ENCODE measurements at regions of chr1 and their contacts with region 1.

Region 1: GRCh38 chr1:38859561-38860453 is at the start of gene RRAGC:
- DNase-seq: peak; percentile 99
- H3K4me3 Mint-ChIP-seq: peak within 1 kb of the TSS; percentile 86
- H3K27ac Mint-ChIP-seq: peak within 1 kb of the TSS; percentile 91
- H3K4me1 Mint-ChIP-seq: peaks cover 51% of the 10 kb centered on the region
- H3K27me3 Mint-ChIP-seq: no peaks in the 10 kb centered on the region
- total RNA-seq, gene RRAGC: 22.3 to 23.3 TPM

Region 2: GRCh38 chr1:38274974-38275373 is 584.8 kb before region 1 on chr1:
- CTCF ChIA-PET with region 1: no interaction called
- intact Hi-C with region 1: no loop called
- DNase-seq: no peak
- H3K4me3 Mint-ChIP-seq: no peak overlapping the region
- H3K27ac Mint-ChIP-seq: no peak overlapping the region
- H3K4me1 Mint-ChIP-seq: no peaks in the 10 kb centered on the region
- H3K27me3 Mint-ChIP-seq: peaks cover 24% of the 10 kb centered on the region

Region 3: DNA sequence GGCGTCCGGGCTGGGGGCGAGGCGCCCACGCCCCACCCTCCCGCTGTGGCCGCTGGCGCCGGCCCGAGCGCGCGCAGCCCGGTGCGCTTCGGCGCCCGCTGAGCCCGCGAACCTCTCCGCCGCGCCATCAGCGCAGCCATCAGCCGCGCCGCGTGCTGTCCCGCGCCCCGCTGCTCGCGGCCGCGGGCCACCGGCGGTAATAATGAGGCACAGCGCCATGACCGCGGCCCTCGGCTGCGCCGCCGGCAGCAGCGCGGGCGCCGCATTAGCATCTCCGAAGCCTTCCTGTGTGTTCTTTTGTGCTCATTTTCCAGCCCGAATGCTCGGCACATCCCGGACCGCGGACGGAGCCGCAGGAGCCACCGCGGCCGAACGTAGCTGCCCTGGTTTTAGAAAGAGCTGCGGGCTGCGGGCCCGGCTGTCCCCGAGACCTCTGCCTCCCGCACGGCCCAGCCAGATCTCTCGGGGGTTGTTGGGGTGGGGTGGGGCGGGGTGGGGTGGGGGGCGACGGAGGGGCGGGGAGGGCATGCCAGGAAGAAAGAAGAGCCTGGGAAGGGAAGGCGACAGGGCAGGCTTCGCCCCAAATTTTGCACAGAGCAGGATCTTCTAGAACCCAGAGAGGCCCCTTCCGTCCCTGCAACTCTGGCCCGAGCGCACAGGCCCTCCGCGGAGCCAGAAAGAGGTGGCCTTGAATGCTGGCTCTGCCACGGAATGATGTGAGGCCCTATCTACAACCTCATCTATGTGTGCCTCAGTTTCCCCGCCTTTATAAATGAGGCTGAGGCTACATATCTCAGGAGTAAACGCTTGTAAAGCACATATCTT is 55.5 kb before region 1 on chr1:
- CTCF ChIA-PET with region 1: no interaction called
- intact Hi-C with region 1: no loop called
- DNase-seq: no peak
- H3K4me3 Mint-ChIP-seq: peak overlapping the region; percentile 51
- H3K27ac Mint-ChIP-seq: no peak overlapping the region
- H3K4me1 Mint-ChIP-seq: peaks cover 4% of the 10 kb centered on the region
- H3K27me3 Mint-ChIP-seq: peaks cover 50% of the 10 kb centered on the region

Region 4: GRCh38 chr1:38873027-38873969 is 13.5 kb after region 1 on chr1 and contains the start of gene MYCBP:
- CTCF ChIA-PET with region 1: no interaction called
- intact Hi-C with region 1: loop called (anchors 1 kb)
- DNase-seq: peak; percentile 97
- H3K4me3 Mint-ChIP-seq: peak within 1 kb of the TSS; percentile 86
- H3K27ac Mint-ChIP-seq: peak within 1 kb of the TSS; percentile 57
- H3K4me1 Mint-ChIP-seq: peaks cover 19% of the 10 kb centered on the region
- H3K27me3 Mint-ChIP-seq: no peaks in the 10 kb centered on the region
- total RNA-seq, gene MYCBP: 54.6 to 58.0 TPM

Region 5: GRCh38 chr1:38891753-38892152 is 31.9 kb after region 1 on chr1:
- CTCF ChIA-PET with region 1: no interaction called
- intact Hi-C with region 1: no loop called
- DNase-seq: no peak
- H3K4me3 Mint-ChIP-seq: no peak overlapping the region
- H3K27ac Mint-ChIP-seq: no peak overlapping the region
- H3K4me1 Mint-ChIP-seq: no peaks in the 10 kb centered on the region
- H3K27me3 Mint-ChIP-seq: no peaks in the 10 kb centered on the region

Region 6: DNA sequence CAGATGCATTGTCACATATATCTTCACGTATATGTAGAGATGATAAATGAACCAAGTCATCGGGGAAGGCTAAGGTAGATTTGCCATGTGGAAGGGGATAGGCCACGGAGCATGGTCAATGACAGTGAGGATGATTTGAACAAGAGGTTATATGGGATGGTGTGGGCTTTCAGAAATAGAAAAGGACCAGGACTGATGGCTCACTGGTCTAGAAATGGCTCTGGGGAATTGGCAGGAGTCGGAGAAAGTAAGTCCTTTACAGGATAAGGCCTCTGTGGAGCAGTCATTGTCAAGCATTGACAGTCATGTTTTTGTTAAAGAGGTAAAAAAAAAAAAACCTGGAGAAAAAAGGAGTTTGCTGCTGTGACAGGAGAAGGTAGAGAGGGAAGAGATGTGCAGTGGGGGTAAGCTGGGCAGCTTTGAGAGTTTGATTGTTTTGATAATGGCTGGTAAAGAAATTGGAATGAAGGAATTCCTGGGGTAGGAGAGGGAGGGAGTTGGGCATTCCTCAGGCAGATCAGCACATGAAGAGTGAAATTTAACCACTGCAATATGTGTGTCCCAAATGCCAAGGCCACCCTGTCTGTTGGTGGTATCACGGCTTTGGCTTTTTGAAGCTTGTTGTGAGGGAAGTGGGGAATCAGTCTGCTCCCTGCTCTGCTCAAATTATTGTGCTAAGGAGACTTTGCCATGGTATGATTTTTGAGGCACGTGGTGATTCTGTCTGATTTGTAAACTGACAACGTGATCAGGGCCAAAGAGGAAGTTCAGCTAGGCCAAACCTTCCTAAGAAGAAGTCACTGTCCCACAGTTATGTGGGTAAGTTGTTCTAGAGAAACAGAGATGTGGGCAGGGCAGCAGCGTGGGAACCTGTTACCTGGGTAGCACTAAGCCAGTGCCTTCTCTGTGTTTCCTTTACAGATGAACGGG is 370.7 kb after region 1 on chr1:
- CTCF ChIA-PET with region 1: no interaction called
- intact Hi-C with region 1: no loop called
- DNase-seq: peak; percentile 29
- H3K4me3 Mint-ChIP-seq: peak overlapping the region; percentile 63
- H3K27ac Mint-ChIP-seq: peak overlapping the region; percentile 16
- H3K4me1 Mint-ChIP-seq: peaks cover 59% of the 10 kb centered on the region
- H3K27me3 Mint-ChIP-seq: no peaks in the 10 kb centered on the region

Region 7: GRCh38 chr1:39398278-39399021 is 538.6 kb after region 1 on chr1:
- CTCF ChIA-PET with region 1: no interaction called
- intact Hi-C with region 1: loop called (anchors 10 kb)
- DNase-seq: peak; percentile 58
- H3K4me3 Mint-ChIP-seq: no peak overlapping the region
- H3K27ac Mint-ChIP-seq: peak overlapping the region; percentile 68
- H3K4me1 Mint-ChIP-seq: peaks cover 63% of the 10 kb centered on the region
- H3K27me3 Mint-ChIP-seq: no peaks in the 10 kb centered on the region

Region 8: DNA sequence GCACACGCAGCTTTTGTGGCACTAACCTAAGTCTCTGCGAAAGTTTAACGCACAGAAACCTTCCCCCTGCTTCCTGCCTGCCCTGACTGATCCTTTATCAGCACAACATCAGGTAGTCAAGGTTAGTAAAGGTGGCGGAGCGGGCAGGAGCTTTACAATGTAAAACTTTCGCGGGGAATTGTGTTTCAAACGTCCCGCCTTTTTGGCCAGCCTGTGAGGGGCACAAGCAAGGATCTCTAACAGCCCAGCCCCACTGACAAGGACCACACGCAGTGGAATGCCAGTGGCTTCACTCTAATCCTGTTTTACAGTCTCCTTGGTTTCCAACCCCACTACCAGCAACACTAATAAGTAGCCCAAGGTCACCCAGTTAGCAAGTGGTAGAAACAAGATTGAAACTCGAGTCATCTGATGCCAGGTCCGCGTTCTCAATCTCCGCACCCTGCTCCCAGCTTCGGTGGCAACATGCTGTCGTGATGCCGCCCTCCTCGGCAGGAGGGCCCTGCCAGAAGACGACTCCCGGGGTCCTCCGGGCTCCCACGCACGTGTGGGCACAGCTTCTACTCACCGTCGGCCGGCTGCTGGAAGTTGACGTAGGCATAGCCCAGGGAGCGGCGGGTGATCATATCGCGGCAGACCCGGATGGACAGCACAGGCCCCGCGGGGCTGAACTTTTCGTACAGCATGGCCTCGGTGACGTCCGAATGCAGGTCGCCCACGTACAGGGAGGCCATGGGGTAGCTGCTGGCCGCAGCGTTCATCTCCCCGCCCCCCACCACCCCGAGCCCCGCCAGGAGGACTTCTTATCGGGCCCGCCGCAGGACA is 715.6 kb after region 1 on chr1:
- CTCF ChIA-PET with region 1: no interaction called
- intact Hi-C with region 1: loop called (anchors 10 kb)
- DNase-seq: peak; percentile 59
- H3K4me3 Mint-ChIP-seq: peak overlapping the region; percentile 84
- H3K27ac Mint-ChIP-seq: peak overlapping the region; percentile 91
- H3K4me1 Mint-ChIP-seq: peaks cover 42% of the 10 kb centered on the region
- H3K27me3 Mint-ChIP-seq: no peaks in the 10 kb centered on the region